Activated T-helper 1 cell treated with anti-CD3 and anti-CD28 coated beads, Interleukin-12 subunit alpha, Interleukin-12 subunit beta, Interleukin-2, Interleukin-4 antibody, amounts not matched to agents 30 ng/mL and 10 ng/mL and 1 ng/mL, durations not matched to agents 14 hours and 24 hours and 36 hours (primary cell): ENCODE measurements at regions of chr19 and their contacts with region 1.

Region 1: GRCh38 chr19:5622463-5623396 is at the starts of genes SAFB and SAFB2:
- DNase-seq: peak; percentile 100
- H3K4me3 Mint-ChIP-seq: peak within 1 kb of the TSS; percentile 100
- H3K27ac Mint-ChIP-seq: peak within 1 kb of the TSS; percentile 100
- H3K4me1 Mint-ChIP-seq: peaks cover 63% of the 10 kb centered on the region
- H3K27me3 Mint-ChIP-seq: peaks cover 3% of the 10 kb centered on the region
- total RNA-seq, gene SAFB: 143 and 146 TPM in 2 replicates
- total RNA-seq, gene SAFB2: 104 and 106 TPM in 2 replicates

Region 2: DNA sequence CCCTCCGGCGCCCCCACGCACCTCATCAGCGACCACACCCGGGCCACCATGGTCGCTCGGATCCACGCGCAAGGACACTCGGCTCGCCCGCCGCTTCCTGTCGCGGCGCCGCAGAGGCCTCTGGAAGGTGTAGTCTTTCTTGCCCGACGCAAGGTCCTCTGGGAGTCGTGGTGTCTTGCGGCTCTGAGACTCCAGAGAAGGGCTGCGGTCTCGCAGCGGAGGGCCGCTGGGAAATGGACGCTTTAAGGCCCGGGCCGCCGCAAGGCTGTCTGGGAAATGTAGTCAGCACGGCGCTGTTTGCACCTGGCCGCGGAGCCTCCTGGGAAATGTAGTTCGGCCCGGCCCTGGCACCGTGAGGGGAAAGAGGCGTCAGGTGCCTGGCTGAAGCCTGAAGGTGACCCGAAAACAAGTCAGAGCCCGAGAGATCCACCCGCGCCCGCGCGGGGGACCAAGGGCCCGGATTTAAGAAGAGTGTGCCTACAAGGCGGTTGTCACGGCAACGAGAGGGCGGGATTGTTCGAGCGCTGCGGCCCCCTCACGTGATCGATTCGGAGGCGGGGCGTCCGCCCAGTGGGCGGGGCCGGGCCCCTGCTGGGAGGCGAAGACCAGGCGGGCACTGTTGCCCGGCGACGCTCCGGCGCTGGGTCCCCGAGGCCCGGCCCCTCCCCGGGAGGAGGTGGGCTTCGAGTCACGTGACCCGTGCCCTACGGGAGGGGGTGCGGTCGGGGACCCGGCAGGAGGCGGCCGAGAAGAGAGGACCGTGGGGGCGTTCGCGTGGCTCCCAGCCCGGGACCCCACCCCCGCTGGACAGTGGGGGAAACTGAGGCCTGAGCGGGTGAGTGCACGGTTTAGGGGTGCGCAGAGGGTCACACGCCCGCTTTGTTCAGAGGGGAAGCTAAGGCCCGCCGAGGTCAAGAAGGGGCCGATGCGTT is 58.0 kb after region 1 on chr19 and contains the starts of genes HSD11B1L and MICOS13:
- intact Hi-C with region 1: loop called (anchors 1 kb)
- DNase-seq: peak; percentile 97
- H3K4me3 Mint-ChIP-seq: peak within 1 kb of the TSS; percentile 99
- H3K27ac Mint-ChIP-seq: peak within 1 kb of the TSS; percentile 94
- H3K4me1 Mint-ChIP-seq: peaks cover 19% of the 10 kb centered on the region
- H3K27me3 Mint-ChIP-seq: peaks cover 3% of the 10 kb centered on the region
- total RNA-seq, gene HSD11B1L: 1.9 TPM in 2 replicates
- total RNA-seq, gene MICOS13: 57.4 and 60.6 TPM in 2 replicates

Region 3: GRCh38 chr19:6199240-6199983 is 576.7 kb after region 1 on chr19:
- intact Hi-C with region 1: loop called (anchors 5 kb)
- DNase-seq: peak; percentile 99
- H3K4me3 Mint-ChIP-seq: peak overlapping the region; percentile 99
- H3K27ac Mint-ChIP-seq: peak overlapping the region; percentile 94
- H3K4me1 Mint-ChIP-seq: peaks cover 22% of the 10 kb centered on the region
- H3K27me3 Mint-ChIP-seq: peaks cover 2% of the 10 kb centered on the region